RWPE1 (cell line): ENCODE measurements at regions of chr20 and their contacts with region 1.

Region 1: GRCh38 chr20:62791301-62792181 is 4.7 kb upstream of the MRGBP start:
- DNase-seq: peak; percentile 96
- H3K27ac ChIP-seq: peak overlapping the region; percentile 97
- CTCF ChIP-seq: peak; percentile 100

Region 2: GRCh38 chr20:62642040-62642665 is 149.4 kb before region 1 on chr20 and contains the start of gene SLCO4A1:
- CTCF ChIA-PET with region 1: interaction called, 10 read pairs
- POLR2A ChIA-PET with region 1: interaction called, 3 read pairs
- DNase-seq: peak; percentile 94
- H3K27ac ChIP-seq: peak within 1 kb of the TSS; percentile 98
- CTCF ChIP-seq: no peak

Region 3: GRCh38 chr20:62668441-62669027 is 123.0 kb before region 1 on chr20:
- CTCF ChIA-PET with region 1: interaction called, 70 read pairs
- POLR2A ChIA-PET with region 1: no interaction called
- DNase-seq: peak; percentile 96
- H3K27ac ChIP-seq: peak overlapping the region; percentile 26
- CTCF ChIP-seq: peak; percentile 97

Region 4: GRCh38 chr20:62685781-62686555 is 105.6 kb before region 1 on chr20:
- CTCF ChIA-PET with region 1: interaction called, 25 read pairs
- POLR2A ChIA-PET with region 1: interaction called, 3 read pairs
- DNase-seq: no peak
- H3K27ac ChIP-seq: peak overlapping the region; percentile 4; the same call in 1 of the 2 replicates
- CTCF ChIP-seq: no peak

Region 5: GRCh38 chr20:62710886-62711493 is 80.6 kb before region 1 on chr20:
- CTCF ChIA-PET with region 1: interaction called, 29 read pairs
- POLR2A ChIA-PET with region 1: interaction called, 4 read pairs
- DNase-seq: peak; percentile 86
- H3K27ac ChIP-seq: peak overlapping the region; percentile 96
- CTCF ChIP-seq: no peak

Region 6: GRCh38 chr20:62772990-62773844 is 18.3 kb before region 1 on chr20:
- CTCF ChIA-PET with region 1: interaction called, 14 read pairs
- POLR2A ChIA-PET with region 1: interaction called, 3 read pairs
- DNase-seq: peak; percentile 89
- H3K27ac ChIP-seq: peak overlapping the region; percentile 99
- CTCF ChIP-seq: no peak

Region 7: DNA sequence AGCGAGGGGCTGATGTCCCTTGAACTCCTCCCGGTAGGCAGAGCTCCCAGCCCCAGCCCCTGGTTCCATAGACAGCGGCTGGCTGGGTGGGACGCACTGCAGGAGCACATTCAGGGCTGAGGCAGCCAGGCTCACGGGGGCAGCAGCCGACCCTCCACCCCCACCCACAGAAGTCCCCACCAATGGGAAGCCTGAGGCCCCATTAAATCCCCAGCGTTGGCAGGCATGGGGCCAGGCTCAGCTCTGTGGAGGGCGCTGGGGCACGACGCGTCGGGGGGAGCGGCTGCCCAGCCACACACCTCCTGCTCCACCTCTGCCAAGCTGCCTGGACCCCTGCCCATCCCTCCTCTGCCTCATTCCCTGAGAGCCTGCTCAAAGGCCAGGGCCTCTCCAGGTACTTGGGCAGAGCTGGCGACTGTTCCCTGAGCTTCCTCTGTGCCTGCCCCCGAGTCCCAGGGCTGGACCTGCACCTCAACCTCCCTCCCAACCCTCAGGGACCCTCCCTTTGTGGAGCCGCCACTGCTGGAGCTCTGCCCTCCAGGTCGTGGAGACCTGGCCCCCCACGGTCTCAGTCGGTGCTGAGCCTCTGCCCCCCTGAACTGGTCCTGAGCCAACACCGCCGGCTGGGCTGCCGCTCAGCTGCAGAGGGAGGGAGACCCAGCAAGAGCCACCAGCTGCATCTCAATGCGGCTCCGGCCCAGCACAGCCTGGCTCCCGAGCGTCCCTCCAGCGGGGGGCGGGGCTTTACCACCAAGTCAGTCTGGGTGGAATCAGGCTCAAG is 560.5 kb after region 1 on chr20:
- CTCF ChIA-PET with region 1: no interaction called
- POLR2A ChIA-PET with region 1: no interaction called
- DNase-seq: no peak
- H3K27ac ChIP-seq: no peak overlapping the region
- CTCF ChIP-seq: no peak